ENCODE measurements at regions of chr2 and their contacts with region 1.

Region 1: DNA sequence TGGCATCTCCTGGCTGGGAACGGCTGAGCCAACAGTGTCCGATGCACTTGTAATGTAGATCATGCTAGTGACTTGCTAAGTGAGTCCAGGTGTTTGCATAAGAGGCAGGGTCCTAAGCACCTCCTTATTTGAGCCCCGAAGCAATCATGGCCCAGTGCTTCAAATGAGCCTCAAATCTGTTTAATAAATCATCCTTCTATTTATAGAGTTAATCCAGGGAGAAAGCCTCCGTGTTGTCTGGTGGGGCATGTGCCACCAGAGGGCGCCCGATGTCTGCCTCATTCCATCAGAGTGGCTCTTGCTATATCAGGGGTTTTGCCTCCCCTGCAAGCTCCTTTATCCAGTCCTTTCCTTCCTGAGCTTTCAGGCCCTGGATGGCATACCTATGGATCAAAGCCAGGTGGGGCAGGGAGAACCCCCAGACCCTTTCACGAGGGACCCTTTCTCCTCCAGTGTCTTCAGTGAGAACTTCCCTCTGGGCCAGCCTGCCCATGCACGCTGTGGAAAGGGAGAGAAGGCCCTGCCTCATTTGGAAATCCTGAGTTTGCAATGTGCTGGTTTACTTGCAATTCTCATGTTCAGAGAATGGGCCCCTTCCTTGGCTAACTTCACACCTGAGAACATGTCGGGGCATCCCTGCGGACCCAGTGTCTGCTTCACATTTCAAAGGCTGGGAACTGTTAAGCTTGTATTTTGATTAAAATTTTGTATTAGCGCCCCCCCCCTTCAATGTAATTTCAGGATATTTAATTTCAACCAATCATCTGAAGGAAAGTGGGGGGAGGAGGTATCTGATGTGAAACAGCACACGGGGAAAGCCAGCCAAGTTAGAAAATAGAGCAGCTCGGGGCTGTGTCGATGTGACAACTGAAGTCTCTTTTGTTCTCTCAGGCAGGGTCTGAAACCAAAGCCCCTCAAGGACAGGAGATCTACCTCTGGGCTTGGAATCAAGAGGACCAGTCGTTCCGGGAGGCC is 39.7 kb downstream of the RDH14 start:
- DNase-seq: peak; percentile 88
- ATAC-seq: peak; percentile 68
- H3K4me3 ChIP-seq: no peak overlapping the region
- H3K27ac ChIP-seq: no peak overlapping the region
- H3K4me1 ChIP-seq: peaks cover 35% of the 10 kb centered on the region
- H3K27me3 ChIP-seq: no peaks in the 10 kb centered on the region
- CTCF ChIP-seq: peak; percentile 97

Region 2: GRCh38 chr2:18435421-18436037 is 85.2 kb before region 1 on chr2:
- CTCF ChIA-PET with region 1: no interaction called
- POLR2A ChIA-PET with region 1: no interaction called
- intact Hi-C with region 1: loop called (anchors 1 kb)
- DNase-seq: peak; percentile 82
- ATAC-seq: peak; percentile 61
- H3K4me3 ChIP-seq: no peak overlapping the region
- H3K27ac ChIP-seq: no peak overlapping the region
- H3K4me1 ChIP-seq: peaks cover 17% of the 10 kb centered on the region
- H3K27me3 ChIP-seq: no peaks in the 10 kb centered on the region
- CTCF ChIP-seq: peak; percentile 86

Region 3: DNA sequence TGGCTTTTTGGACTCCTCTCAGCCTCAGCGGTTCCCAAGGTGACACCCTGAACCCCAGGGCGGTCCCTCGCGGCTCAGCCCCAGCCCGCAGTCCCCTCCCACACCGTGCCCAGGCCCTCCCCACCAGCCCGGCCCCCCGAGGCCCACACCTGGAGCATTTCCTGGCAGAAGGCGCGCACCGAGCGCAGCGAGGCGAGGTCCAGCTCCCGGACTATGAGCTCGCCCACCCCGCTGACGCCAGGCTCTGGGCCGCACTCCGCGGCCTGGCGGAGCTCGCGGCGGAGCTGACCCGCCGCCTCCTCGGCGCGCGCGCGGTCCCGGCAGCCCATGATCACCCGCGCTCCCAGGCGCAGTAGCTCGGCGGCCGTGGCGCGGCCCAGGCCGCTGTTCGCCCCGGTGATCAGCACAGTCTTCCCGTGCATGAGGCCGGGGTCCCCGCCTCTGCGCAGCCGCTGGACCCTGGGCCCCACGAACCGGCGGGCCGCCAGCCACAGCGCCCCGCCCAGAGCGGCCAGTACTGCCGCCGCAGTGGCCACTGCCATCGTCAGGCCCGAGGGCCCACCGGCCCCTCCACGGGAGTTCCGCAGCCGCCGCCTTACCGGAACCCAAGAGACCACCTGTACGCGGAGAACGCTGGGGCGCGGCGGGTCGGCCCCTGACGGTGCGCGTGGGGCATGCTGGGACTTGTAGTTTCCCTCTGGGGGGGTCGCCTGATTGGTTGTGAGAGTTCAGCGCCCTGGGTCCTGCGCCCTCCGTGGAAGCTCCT is 39.5 kb after region 1 on chr2 and contains the start of gene RDH14:
- CTCF ChIA-PET with region 1: interaction called, 3 read pairs
- POLR2A ChIA-PET with region 1: interaction called, 3 read pairs
- intact Hi-C with region 1: loop called (anchors 5 kb)
- DNase-seq: peak; percentile 84
- ATAC-seq: peak; percentile 92
- H3K4me3 ChIP-seq: peak within 1 kb of the TSS; percentile 95
- H3K27ac ChIP-seq: peak within 1 kb of the TSS; percentile 48
- H3K4me1 ChIP-seq: peaks cover 17% of the 10 kb centered on the region
- H3K27me3 ChIP-seq: no peaks in the 10 kb centered on the region
- CTCF ChIP-seq: no peak
- total RNA-seq, gene RDH14: 30.9 and 43.4 TPM in 2 replicates

Region 4: GRCh38 chr2:18651842-18652774 is 131.4 kb after region 1 on chr2:
- CTCF ChIA-PET with region 1: no interaction called
- POLR2A ChIA-PET with region 1: no interaction called
- intact Hi-C with region 1: loop called (anchors 5 kb)
- DNase-seq: peak; percentile 30
- ATAC-seq: peak; percentile 75
- H3K4me3 ChIP-seq: no peak overlapping the region
- H3K27ac ChIP-seq: peak overlapping the region; percentile 14
- H3K4me1 ChIP-seq: peaks cover 14% of the 10 kb centered on the region
- H3K27me3 ChIP-seq: no peaks in the 10 kb centered on the region
- CTCF ChIP-seq: no peak

Region 5: DNA sequence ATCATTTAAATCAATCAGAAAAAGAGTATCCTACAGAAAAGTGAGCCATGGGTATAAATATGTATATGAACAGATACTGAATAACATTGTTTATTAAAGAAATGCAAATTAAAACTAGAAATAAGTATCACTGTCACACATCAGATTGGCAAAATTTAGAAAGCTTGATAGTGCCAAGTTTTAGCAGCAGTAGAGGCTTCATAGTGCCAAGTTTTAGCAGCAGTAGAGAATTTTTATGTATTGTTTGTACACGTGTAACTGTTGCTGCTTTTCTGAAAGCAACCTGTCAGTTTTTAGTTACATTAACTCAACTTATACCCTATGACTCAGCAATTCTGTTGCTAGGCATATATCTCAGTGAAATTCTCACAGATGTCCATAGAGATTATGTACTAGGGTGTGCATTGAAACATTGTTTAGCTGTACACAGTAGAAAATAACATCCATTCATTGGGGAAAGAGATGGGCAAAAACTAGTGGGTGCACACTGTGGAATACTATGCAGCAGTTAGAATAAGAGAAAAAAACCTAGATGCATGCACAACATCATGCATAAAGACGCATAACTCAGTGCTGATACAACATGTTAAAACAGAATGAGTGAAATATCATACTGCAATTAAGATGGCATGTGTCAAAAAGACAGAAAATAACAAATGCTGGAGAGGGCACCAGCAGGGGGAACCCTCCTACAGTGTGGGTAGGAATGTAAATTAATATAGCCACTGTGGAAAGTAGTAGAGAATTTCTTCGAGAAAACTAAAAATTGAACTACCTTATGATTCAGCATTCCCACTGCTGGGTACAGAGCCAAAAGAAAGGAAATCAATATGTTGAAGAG is 363.1 kb after region 1 on chr2:
- CTCF ChIA-PET with region 1: no interaction called
- POLR2A ChIA-PET with region 1: no interaction called
- intact Hi-C with region 1: loop called (anchors 5 kb)
- DNase-seq: peak; percentile 69
- ATAC-seq: peak; percentile 60
- H3K4me3 ChIP-seq: no peak overlapping the region
- H3K27ac ChIP-seq: no peak overlapping the region
- H3K4me1 ChIP-seq: 0 out of 2 replicates have a peak, but pooled peaks cover 9% of the 10 kb centered on the region
- H3K27me3 ChIP-seq: no peaks in the 10 kb centered on the region
- CTCF ChIP-seq: peak; percentile 85

Region 6: DNA sequence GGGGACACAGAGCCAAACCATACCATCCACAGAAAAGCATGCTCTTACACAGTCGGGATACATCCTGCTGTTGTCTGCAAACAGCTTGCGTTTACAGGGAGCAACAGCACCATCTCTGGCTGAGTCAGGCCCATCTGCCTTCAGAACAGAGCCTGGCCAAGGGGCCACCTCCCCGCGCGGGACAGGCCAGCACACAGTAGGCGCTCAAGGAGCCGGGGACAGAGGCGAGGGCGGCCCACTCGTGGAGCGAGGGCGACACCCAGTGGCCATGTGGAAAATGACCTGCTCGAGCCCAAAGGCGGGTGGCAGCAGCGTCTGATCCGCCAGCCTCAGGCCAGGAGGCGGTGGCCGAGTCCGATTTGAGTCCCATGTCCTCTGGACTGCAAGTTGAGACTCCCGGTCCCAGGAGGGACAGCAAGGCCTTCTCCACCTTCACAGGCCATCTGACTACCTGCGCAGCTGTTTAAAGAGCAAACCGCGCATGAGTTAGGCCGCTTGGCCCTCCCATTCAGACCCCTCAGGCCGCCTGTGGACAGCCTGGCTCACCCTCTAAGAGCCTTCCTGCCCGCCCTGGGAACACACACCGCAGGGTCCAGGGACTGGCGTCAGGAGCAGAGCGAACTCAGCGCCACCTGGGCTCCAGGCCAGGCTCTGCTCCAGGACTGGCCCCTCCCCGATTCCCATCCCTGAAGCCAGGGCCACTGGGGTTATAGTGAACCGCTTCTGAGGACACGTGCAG is 1342.7 kb after region 1 on chr2:
- CTCF ChIA-PET with region 1: no interaction called
- POLR2A ChIA-PET with region 1: no interaction called
- intact Hi-C with region 1: loop called (anchors 2 kb)
- DNase-seq: peak; percentile 73
- ATAC-seq: peak; percentile 84
- H3K4me3 ChIP-seq: peak overlapping the region; percentile 53
- H3K27ac ChIP-seq: no peak overlapping the region
- H3K4me1 ChIP-seq: peaks cover 15% of the 10 kb centered on the region
- H3K27me3 ChIP-seq: no peaks in the 10 kb centered on the region
- CTCF ChIP-seq: peak; percentile 96

Measured in PC-3 (cell line).